ENCODE measurements at regions of chr16 and their contacts with region 1.

Region 1: DNA sequence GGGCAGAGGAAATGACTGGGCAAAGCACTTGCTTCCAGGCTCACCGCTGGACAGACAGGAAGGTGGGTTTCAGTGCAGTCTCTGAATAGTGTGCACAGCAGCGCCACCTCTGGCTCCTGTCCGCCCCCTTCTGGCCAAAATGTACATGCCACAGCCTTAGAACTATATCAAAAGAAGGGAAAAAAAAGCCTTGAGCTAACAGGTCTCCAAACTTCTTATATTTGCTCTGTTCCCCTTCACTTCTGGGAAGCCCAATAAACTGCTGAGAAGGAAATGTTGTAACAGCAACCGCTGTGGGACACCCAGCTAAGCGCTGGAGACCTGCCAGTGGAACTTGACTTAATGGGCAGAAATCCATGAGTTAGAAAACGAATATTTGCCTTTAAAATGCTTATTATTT is 17.5 kb downstream of the COG7 start:
- DNase-seq: peak; percentile 34 to 82
- H3K4me3 ChIP-seq: no peak overlapping the region
- H3K27ac ChIP-seq: no peak overlapping the region
- H3K4me1 ChIP-seq: no peaks in the 10 kb centered on the region
- H3K27me3 ChIP-seq: no peaks in the 10 kb centered on the region
- CTCF ChIP-seq: peak; percentile 77 to 98 (median 92)
- EP300 ChIP-seq: no peak
- POLR2A ChIP-seq: no peak
- RAD21 ChIP-seq: peak; percentile 73 to 76

Region 2: DNA sequence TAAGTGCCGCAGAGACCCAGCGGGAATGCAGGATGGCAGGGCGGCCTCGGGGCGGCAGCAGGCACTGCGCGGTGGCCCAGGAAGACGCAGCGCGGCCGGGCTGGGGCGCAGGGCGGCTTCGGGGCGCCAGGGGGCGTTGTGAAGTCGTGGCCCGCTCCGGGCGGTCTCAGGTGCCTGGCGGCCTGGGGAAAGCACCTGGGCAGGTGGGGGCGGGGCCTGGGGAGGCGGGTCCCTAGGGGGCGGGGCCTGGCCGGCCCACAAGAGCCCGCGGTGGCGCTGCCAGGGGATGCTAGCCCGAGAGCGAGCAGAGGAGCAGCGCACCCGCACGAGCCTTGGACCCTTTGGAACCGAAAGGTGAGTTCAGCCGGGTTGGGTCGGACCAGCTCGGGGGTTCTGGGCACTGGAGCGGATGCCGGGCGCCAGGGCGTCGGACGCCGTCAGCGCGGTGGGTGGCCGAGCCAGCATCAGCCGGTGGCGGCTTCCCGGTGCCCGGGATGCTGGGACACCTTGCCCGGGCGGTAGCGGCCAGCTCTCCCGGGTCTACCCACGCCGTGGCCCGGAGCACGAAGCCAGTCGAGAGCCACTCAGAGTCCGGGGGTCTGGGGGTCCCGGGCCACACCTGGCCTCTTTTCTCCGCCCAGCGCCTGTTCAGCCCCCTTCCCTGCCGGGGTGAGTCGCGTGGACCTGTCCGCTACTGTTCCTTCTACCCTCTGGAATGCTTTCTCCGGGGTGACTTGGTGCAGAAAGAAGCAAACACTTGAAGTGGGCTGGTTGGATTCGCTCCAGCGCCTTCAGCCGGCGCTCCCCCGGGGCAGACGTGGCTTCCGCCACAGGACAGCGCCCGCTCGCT is 252.8 kb before region 1 on chr16 and contains the start of gene SCNN1G:
- CTCF ChIA-PET with region 1: interaction called, 178 read pairs
- POLR2A ChIA-PET with region 1: no interaction called
- DNase-seq: peak; percentile 84 to 98
- H3K4me3 ChIP-seq: peak within 1 kb of the TSS; percentile 35 to 68 (median 55)
- H3K27ac ChIP-seq: no peak within 1 kb of the TSS
- H3K4me1 ChIP-seq: peaks cover 0 to 8% (median 4%) of the 10 kb centered on the region in 4 experiments; a peak in 4 of 7 replicates
- H3K27me3 ChIP-seq: peaks cover 7 to 23% (median 16%) of the 10 kb centered on the region in 4 experiments
- CTCF ChIP-seq: peak; percentile 96 to 99 (median 97)
- EP300 ChIP-seq: 0 out of 3 replicates have a peak, but pooled peaks of 1 of the 2 experiments have one; percentile 64
- POLR2A ChIP-seq: no peak
- RAD21 ChIP-seq: peak; percentile 91 to 98
- total RNA-seq, gene SCNN1G: 0.99 and 1.1 TPM in 2 replicates

Region 3: GRCh38 chr16:23223368-23223767 is 212.1 kb before region 1 on chr16:
- CTCF ChIA-PET with region 1: interaction called, 17 read pairs
- POLR2A ChIA-PET with region 1: no interaction called
- DNase-seq: no peak
- H3K4me3 ChIP-seq: no peak overlapping the region
- H3K27ac ChIP-seq: no peak overlapping the region
- H3K4me1 ChIP-seq: peaks cover 0 to 10% (median 8%) of the 10 kb centered on the region in 4 experiments; a peak in 5 of 7 replicates
- H3K27me3 ChIP-seq: no peaks in the 10 kb centered on the region
- CTCF ChIP-seq: no peak
- EP300 ChIP-seq: no peak
- POLR2A ChIP-seq: no peak
- RAD21 ChIP-seq: no peak

Region 4: DNA sequence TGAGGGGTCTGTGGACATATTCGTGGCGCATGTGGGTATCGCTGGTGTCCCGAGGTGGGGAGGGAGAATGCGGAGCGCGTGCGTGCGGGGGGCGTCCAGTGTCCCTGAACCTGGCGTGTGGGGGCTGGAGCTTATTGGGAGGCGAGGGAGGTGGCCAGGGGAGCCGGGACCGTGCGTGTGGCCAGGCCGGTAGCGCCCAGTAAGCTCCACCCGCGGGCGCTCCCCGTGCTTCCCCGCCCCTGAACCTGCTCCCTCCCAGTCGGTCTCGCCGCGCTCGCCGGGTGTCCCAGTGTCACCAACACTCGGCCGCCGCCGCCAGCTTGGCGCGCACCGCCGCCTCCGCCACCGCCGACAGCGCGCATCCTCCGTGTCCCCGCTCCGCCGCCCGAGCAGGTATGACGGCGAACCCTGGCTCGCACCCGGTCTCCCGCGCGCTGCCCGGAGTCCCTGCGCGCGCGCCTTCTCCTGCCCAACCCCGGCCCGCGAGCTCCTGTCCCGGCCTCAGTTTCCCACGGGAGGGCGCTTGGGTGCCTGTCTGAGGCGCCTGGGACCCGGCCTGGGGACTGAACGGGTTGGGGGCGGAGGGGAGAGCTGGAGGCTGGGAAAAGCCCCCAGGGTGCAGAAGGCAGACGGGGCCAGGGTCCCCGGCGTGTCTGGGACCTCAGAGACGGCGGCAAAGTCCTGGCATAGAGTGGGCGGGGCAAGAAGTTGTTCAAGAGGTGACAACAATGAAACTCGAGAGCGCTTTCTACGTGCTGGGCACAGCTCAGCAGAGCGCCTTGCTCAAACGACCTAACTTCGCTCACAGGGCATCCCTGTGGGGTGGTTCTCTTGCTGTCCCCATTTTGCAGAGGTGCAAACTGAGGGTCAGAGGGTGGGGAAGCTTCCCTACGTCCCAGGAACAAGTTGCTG is 133.2 kb before region 1 on chr16 and contains the start of gene SCNN1B:
- CTCF ChIA-PET with region 1: interaction called, 47 read pairs
- POLR2A ChIA-PET with region 1: interaction called, 3 read pairs
- DNase-seq: peak in 1 of 2 experiments; percentile 67
- H3K4me3 ChIP-seq: peak within 1 kb of the TSS; percentile 30 to 70 (median 54)
- H3K27ac ChIP-seq: no peak within 1 kb of the TSS
- H3K4me1 ChIP-seq: peaks cover 0 to 11% (median 1%) of the 10 kb centered on the region in 4 experiments; a peak in 4 of 7 replicates
- H3K27me3 ChIP-seq: peaks cover 14 to 22% (median 21%) of the 10 kb centered on the region in 4 experiments
- CTCF ChIP-seq: no peak
- EP300 ChIP-seq: no peak
- POLR2A ChIP-seq: no peak
- RAD21 ChIP-seq: peak in 1 of 2 experiments; percentile 40; a peak in 3 of 4 replicates
- total RNA-seq, gene SCNN1B: 0.95 TPM in 1 of 2 replicates, not detected in the other

Region 5: GRCh38 chr16:23348579-23349469 is 86.7 kb before region 1 on chr16:
- CTCF ChIA-PET with region 1: interaction called, 25 read pairs
- POLR2A ChIA-PET with region 1: no interaction called
- DNase-seq: peak; percentile 59 to 61
- H3K4me3 ChIP-seq: no peak overlapping the region
- H3K27ac ChIP-seq: no peak overlapping the region
- H3K4me1 ChIP-seq: peaks cover 0 to 4% (median under 1%) of the 10 kb centered on the region in 4 experiments; a peak in 3 of 7 replicates
- H3K27me3 ChIP-seq: no peaks in the 10 kb centered on the region
- CTCF ChIP-seq: peak; percentile 48 to 74 (median 62)
- EP300 ChIP-seq: no peak
- POLR2A ChIP-seq: no peak
- RAD21 ChIP-seq: peak; percentile 44 to 52; a peak in 3 of 4 replicates

Region 6: DNA sequence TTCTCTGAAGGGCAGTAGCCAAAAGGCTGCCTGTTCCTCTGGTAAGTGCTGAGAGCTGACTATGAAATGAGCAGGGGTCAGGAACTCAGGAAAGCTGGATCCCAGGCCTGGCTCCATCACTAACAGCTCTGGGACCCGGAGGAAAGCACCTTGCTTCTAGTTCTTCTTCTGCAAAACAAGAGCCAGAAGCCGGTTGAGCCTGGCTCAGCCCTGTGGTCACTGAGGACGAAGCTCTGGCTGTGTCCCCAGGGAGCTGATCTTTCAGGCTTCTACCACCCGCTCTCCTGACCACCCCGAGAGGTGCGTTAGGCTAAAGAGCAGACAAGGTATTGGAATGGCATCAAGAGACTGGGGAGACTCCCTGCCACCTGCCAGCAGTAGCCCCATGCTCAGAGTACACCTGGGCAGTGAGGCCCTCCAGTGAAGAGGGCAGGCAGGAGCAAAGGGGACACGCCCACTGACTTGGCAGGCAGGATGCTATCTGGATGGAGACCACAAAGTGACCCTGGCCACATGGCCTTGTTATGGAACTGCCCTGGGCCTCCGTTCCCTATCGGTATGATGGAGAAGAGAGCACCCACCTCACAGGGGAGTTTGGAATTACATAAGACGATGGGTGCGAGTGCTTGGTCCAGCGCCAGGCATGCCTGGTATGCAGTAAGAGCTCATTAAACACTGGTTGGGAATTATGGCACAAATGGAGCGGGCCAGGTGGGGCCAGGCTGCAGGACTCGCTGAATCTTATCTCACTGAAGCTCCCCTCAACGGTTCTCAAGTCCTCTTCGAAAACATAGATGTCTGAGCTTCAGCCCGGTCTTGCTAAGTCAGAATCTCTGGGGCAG is 43.9 kb before region 1 on chr16:
- CTCF ChIA-PET with region 1: interaction called, 38 read pairs
- POLR2A ChIA-PET with region 1: no interaction called
- DNase-seq: no peak
- H3K4me3 ChIP-seq: no peak overlapping the region
- H3K27ac ChIP-seq: no peak overlapping the region
- H3K4me1 ChIP-seq: no peaks in the 10 kb centered on the region; a peak in 1 of 7 replicates
- H3K27me3 ChIP-seq: no peaks in the 10 kb centered on the region
- CTCF ChIP-seq: no peak
- EP300 ChIP-seq: no peak
- POLR2A ChIP-seq: no peak
- RAD21 ChIP-seq: no peak

Region 7: GRCh38 chr16:23416816-23417215 is 18.7 kb before region 1 on chr16:
- CTCF ChIA-PET with region 1: interaction called, 34 read pairs
- POLR2A ChIA-PET with region 1: interaction called, 4 read pairs
- DNase-seq: no peak
- H3K4me3 ChIP-seq: no peak overlapping the region
- H3K27ac ChIP-seq: no peak overlapping the region
- H3K4me1 ChIP-seq: peaks cover 0 to 2% (median 0%) of the 10 kb centered on the region in 4 experiments; a peak in 1 of 7 replicates
- H3K27me3 ChIP-seq: no peaks in the 10 kb centered on the region
- CTCF ChIP-seq: no peak
- EP300 ChIP-seq: no peak
- POLR2A ChIP-seq: no peak
- RAD21 ChIP-seq: no peak

Measured in H1 (cell line).